ENCODE measurements at regions of chr2 and their contacts with region 1.

Region 1: GRCh38 chr2:127197475-127198385 is 22.4 kb downstream of the CYP27C1 start:
- DNase-seq: peak; percentile 71 to 83
- H3K4me3 ChIP-seq: no peak overlapping the region
- H3K27ac ChIP-seq: no peak overlapping the region
- H3K4me1 ChIP-seq: no peaks in the 10 kb centered on the region
- H3K27me3 ChIP-seq: no peaks in the 10 kb centered on the region
- CTCF ChIP-seq: peak; percentile 88

Region 2: DNA sequence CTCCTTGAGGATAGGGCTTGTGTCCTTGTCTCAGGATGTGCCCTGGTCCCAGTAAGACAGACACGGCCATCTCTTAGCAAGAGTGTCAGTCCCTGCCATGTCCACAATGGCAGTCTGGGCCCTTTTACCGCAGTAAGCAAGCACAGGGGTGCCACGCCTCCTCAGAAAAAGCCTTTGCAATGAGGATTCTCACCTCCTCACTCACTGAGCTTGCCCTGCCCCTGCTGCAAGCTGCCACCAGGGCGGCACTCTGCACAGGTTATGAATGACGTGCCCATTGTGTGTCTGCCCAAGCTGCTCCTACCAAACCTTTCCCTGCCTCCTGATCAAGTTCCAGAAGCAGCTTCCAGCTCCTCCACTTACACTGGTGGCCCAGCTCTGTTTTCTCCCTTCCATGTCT is 72.9 kb after region 1 on chr2:
- CTCF ChIA-PET with region 1: interaction called, 3 read pairs
- POLR2A ChIA-PET with region 1: no interaction called
- intact Hi-C with region 1: loop called (anchors 5 kb)
- DNase-seq: no peak
- H3K4me3 ChIP-seq: no peak overlapping the region
- H3K27ac ChIP-seq: no peak overlapping the region
- H3K4me1 ChIP-seq: no peaks in the 10 kb centered on the region
- H3K27me3 ChIP-seq: no peaks in the 10 kb centered on the region
- CTCF ChIP-seq: peak; percentile 55

Region 3: DNA sequence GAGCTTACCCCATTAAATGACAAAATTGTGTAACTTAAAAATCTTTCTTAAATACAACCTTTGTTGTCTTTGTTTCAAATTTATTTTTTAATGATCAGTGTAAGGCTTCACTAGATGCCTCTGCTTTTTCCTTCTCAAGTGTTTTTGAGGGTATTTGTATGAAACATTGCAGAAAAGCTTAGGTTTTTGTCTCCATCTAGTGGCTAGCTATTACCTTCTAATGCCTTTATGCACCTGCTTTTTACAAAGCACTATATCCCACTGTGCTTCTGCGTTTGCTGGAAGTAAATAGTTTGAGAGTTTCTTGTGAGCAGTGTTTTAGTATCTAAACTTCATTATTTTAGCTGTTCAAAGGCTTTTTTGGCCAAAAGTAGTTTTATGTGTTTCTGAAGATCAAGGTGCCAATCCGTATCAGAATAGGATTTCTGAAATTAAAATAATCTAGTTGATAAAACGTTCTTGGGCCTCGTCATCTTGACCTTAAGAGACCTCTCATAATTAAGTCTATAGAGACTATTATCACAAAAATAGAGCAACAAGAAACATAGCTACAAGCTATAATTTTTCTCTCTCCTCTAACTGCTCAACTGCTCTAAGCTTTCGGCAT is 281.6 kb after region 1 on chr2:
- CTCF ChIA-PET with region 1: interaction called, 21 read pairs
- POLR2A ChIA-PET with region 1: no interaction called
- intact Hi-C with region 1: loop called (anchors 1 kb)
- DNase-seq: peak in 1 of 2 experiments; percentile 55
- H3K4me3 ChIP-seq: no peak overlapping the region
- H3K27ac ChIP-seq: no peak overlapping the region
- H3K4me1 ChIP-seq: no peaks in the 10 kb centered on the region
- H3K27me3 ChIP-seq: no peaks in the 10 kb centered on the region
- CTCF ChIP-seq: peak; percentile 91

Measured in PC-9 (cell line).